Dorsolateral prefrontal cortex (tissue), 120 donors: ENCODE measurements at regions of chr12 and their contacts with region 1.

Region 1: GRCh38 chr12:122500685-122501488 is at the start of gene ZCCHC8:
- DNase-seq: peak; percentile 92 to 98 (median 97)
- H3K4me3 ChIP-seq: peak within 1 kb of the TSS; percentile 53 to 97 (median 90)
- H3K27ac ChIP-seq: peak within 1 kb of the TSS; percentile 81 to 99 (median 97)
- H3K27me3 ChIP-seq: no peaks in the 10 kb centered on the region
- CTCF ChIP-seq: peak in 40 of 56 donors; percentile 6 to 60 (median 32)
- total RNA-seq, gene ZCCHC8: 13.4 to 37.0 (median 23.0) TPM

Region 2: GRCh38 chr12:122265931-122266771 is 234.7 kb before region 1 on chr12 and contains the start of gene VPS33A:
- intact Hi-C with region 1: loop called (anchors 10 kb)
- DNase-seq: peak; percentile 94 to 98 (median 96)
- H3K4me3 ChIP-seq: peak within 1 kb of the TSS; percentile 66 to 100 (median 92)
- H3K27ac ChIP-seq: peak within 1 kb of the TSS; percentile 36 to 98 (median 91)
- H3K27me3 ChIP-seq: no peaks in the 10 kb centered on the region
- CTCF ChIP-seq: peak in 34 of 56 donors; percentile 6 to 56 (median 24)
- total RNA-seq, gene VPS33A: 17.9 to 38.0 (median 28.0) TPM

Region 3: GRCh38 chr12:122974274-122974891 is 473.5 kb after region 1 on chr12:
- intact Hi-C with region 1: loop called in 1 of 2 experiments (anchors 10 kb)
- DNase-seq: peak; percentile 97 to 99 (median 98)
- H3K4me3 ChIP-seq: peak overlapping the region; percentile 71 to 100 (median 94)
- H3K27ac ChIP-seq: peak overlapping the region; percentile 94 to 100 (median 99)
- H3K27me3 ChIP-seq: no peaks in the 10 kb centered on the region
- CTCF ChIP-seq: peak in 5 of 56 donors; percentile 7 to 21 (median 15)